GM13976 (cell line): ENCODE measurements at regions of chr1 and their contacts with region 1.

Region 1: GRCh38 chr1:100866041-100866900 is 28.4 kb downstream of the EXTL2 start:
- DNase-seq: peak; percentile 15
- CTCF ChIP-seq: no peak

Region 2: GRCh38 chr1:99808391-99809115 is 1057.7 kb before region 1 on chr1:
- in situ Hi-C with region 1: loop called (anchors 10 kb)
- DNase-seq: peak; percentile 63
- CTCF ChIP-seq: peak; percentile 61

Region 3: GRCh38 chr1:100469578-100469977 is 396.7 kb before region 1 on chr1:
- in situ Hi-C with region 1: loop called (anchors 5 kb)
- DNase-seq: no peak
- CTCF ChIP-seq: no peak

Region 4: GRCh38 chr1:101043776-101044175 is 177.5 kb after region 1 on chr1:
- in situ Hi-C with region 1: no loop called
- DNase-seq: no peak
- CTCF ChIP-seq: no peak

Region 5: DNA sequence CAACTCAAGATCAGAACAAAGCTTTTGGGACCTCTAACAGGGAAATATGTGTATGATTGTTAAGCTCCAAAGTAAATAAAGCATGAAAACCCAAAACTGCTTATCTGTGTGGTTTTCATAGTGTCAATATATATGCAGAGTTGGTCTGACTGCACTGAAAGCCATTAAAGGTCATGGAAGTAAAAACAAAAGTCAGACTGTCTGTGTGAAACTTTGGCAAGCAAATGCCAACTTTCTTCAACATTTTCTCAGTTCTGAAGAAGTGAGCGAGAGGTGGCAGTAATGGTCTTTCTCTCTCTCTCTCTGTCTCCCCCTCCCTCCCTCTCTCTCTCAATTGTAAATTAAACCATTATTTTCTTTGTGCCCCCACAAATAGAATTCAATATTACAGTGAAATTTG is 270.5 kb after region 1 on chr1:
- in situ Hi-C with region 1: no loop called
- DNase-seq: no peak
- CTCF ChIP-seq: peak; percentile 17